CD8-positive, alpha-beta T cell (primary cell): ENCODE measurements at regions of chr10 and their contacts with region 1.

Region 1: DNA sequence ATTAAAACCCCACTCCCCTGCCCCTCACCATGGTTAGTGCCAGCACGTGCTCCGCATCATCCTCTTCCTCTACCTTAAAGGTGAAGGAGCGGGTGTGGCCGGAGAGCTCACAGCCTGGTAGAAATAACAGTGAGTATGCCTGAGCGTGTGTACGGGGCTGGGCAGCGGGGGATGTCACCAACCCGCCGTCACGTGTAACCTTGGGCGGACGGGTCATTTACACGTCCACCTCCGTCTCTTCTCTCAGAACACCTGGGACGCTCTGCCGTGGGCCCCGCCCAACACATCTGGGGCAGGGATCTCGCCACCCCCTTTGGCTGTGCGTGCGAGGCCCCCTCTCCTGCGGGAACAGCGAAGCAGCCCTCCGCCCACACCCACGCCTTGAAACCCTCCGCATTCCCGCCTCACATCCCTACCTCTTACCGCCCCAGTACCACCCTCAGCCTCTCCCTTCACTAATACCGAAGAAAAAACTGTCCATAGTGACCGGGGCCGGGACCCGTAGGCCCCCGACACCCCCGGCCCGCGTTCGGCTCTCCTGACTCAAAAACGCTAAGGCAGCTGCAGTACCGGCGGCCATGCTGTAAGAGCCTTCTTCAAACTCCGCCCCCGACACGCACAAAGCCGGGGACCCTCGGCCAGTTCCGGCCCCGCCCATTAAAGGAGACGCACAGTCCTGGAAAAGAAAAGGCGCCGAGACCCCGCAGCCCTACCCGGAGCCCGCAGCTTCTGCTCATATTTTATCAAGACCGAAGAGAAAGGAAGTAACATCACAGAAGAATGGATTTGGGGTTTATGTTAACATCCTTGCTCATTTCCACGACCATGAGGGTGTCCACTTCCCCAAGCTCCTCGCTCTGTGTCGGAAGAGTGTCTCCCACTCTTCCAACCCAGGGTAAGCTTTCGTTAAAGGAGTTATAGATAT is at the start of gene NPM3:
- DNase-seq: peak; percentile 54 to 88 (median 83)
- ATAC-seq: peak; percentile 80
- H3K4me3 ChIP-seq: peak within 1 kb of the TSS; percentile 81 to 87
- H3K4me3 Mint-ChIP-seq: peak within 1 kb of the TSS; percentile 100
- H3K27ac ChIP-seq: peak within 1 kb of the TSS; percentile 64 to 81
- H3K27ac Mint-ChIP-seq: peak within 1 kb of the TSS; percentile 97
- H3K4me1 ChIP-seq: peaks cover 53% of the 10 kb centered on the region
- H3K4me1 Mint-ChIP-seq: peaks cover 71% of the 10 kb centered on the region
- H3K27me3 ChIP-seq: peaks cover 13 to 20% of the 10 kb centered on the region in 2 experiments
- H3K27me3 Mint-ChIP-seq: peaks cover 6% of the 10 kb centered on the region
- CTCF ChIP-seq: no peak
- total RNA-seq, gene NPM3: 21.1 to 25.1 TPM

Region 2: DNA sequence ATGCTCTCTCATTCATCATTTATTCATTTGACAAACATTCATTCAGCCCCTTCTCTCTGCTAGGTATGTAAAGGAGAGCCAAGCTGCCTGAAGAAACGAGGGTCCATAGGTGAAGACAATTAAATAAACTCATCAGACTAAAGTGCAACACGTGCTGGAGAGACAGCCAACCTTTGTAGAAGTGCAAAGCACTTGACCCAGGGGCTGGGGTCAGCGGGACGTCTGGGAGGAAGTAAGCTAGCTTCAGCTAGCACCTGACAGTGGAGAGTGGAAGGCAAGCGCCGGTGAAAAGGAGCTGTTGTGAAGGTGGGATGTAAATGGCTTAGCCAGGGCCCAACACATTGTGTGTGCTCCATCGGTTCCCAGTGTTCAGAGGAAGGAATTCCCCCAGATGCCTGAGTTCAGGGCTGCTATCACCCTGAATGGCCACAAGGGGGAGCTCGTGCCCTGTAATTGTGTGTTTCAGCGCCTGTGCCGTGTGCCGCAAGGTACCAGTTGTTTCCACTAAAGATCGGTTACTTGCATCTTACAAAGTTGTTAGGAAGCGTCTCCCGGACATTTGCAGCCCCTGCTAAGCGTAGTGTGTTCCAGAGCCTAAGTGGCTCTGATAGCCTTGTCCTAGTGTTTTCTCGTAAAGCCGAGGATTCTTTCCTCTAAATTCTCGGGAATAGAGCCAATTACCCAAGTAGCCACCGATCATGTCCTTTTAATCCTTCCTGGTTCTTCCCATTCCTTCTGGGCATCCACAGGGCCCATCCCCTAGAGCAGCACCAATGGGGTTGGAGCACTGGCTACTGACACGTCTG is 621.4 kb before region 1 on chr10:
- CTCF ChIA-PET with region 1: no interaction called
- POLR2A ChIA-PET with region 1: no interaction called
- intact Hi-C with region 1: loop called in 1 of 2 experiments (anchors 5 kb)
- DNase-seq: peak; percentile 33 to 84 (median 70)
- ATAC-seq: peak; percentile 97
- H3K4me3 ChIP-seq: no peak overlapping the region
- H3K4me3 Mint-ChIP-seq: no peak overlapping the region
- H3K27ac ChIP-seq: no peak overlapping the region
- H3K27ac Mint-ChIP-seq: no peak overlapping the region
- H3K4me1 ChIP-seq: peaks cover 3% of the 10 kb centered on the region
- H3K4me1 Mint-ChIP-seq: peaks cover 5% of the 10 kb centered on the region
- H3K27me3 ChIP-seq: peaks cover 3 to 6% of the 10 kb centered on the region in 2 experiments
- H3K27me3 Mint-ChIP-seq: peaks cover 51% of the 10 kb centered on the region
- CTCF ChIP-seq: peak; percentile 90

Region 3: DNA sequence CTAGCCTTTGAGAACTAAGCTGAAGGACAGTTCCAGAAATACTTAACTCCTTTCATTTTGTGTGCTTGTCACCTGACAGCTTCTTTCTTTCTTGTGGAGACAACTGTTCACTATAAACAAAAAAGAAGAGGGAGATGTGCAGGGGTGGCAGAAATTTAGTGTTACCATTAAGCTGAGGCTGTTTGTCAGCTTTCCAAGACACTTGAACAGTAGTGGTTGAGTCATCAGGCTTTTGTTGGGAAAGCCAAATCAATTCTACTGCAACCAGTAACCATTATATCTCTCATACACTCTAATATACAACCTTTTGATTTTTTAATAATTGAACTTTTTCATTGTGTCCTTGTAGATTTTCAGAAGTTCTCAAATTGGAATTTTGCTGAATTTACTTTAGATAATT is 270.3 kb before region 1 on chr10:
- CTCF ChIA-PET with region 1: no interaction called
- POLR2A ChIA-PET with region 1: no interaction called
- intact Hi-C with region 1: no loop called
- DNase-seq: no peak
- ATAC-seq: no peak
- H3K4me3 ChIP-seq: no peak overlapping the region
- H3K4me3 Mint-ChIP-seq: no peak overlapping the region
- H3K27ac ChIP-seq: no peak overlapping the region
- H3K27ac Mint-ChIP-seq: no peak overlapping the region
- H3K4me1 ChIP-seq: no peaks in the 10 kb centered on the region
- H3K4me1 Mint-ChIP-seq: no peaks in the 10 kb centered on the region
- H3K27me3 ChIP-seq: no peaks in the 10 kb centered on the region
- H3K27me3 Mint-ChIP-seq: no peaks in the 10 kb centered on the region
- CTCF ChIP-seq: no peak

Region 4: DNA sequence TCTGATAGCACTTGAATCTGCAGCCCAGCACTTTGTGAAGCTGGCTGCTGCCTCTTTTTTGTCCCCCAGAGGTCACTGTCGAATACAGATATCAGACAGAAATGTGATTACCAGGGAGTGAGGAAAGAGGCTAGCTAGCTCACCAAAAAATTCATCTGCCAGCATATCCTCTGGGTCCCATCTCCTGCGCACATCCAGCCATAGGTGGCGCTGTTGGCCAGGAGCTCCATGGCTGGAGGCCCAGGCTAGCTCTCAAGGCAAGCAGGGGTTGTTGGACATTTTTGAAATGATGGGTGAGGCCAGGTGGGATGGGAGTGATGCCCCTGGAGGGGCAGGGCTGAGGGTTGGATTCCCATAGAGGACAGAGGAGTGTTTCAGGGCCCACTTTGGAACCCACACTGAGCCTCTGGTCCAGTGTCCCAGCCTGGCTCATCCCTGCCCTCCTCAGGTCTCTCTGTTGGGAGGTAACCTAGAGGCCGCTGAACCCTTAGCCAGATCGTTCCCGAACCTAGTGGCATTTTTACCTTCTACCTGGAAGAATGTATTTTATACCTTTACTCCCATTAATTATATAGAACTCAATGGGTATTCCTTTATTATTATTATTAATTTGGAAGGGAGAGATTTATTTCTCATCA is 180.2 kb before region 1 on chr10:
- CTCF ChIA-PET with region 1: interaction called, 13 read pairs
- POLR2A ChIA-PET with region 1: no interaction called
- intact Hi-C with region 1: loop called (anchors 1 kb)
- DNase-seq: peak in 8 of 9 experiments; percentile 26 to 68 (median 48)
- ATAC-seq: peak; percentile 81
- H3K4me3 ChIP-seq: no peak overlapping the region
- H3K4me3 Mint-ChIP-seq: no peak overlapping the region
- H3K27ac ChIP-seq: no peak overlapping the region
- H3K27ac Mint-ChIP-seq: no peak overlapping the region
- H3K4me1 ChIP-seq: no peaks in the 10 kb centered on the region
- H3K4me1 Mint-ChIP-seq: no peaks in the 10 kb centered on the region
- H3K27me3 ChIP-seq: no peaks in the 10 kb centered on the region
- H3K27me3 Mint-ChIP-seq: no peaks in the 10 kb centered on the region
- CTCF ChIP-seq: peak; percentile 75

Region 5: DNA sequence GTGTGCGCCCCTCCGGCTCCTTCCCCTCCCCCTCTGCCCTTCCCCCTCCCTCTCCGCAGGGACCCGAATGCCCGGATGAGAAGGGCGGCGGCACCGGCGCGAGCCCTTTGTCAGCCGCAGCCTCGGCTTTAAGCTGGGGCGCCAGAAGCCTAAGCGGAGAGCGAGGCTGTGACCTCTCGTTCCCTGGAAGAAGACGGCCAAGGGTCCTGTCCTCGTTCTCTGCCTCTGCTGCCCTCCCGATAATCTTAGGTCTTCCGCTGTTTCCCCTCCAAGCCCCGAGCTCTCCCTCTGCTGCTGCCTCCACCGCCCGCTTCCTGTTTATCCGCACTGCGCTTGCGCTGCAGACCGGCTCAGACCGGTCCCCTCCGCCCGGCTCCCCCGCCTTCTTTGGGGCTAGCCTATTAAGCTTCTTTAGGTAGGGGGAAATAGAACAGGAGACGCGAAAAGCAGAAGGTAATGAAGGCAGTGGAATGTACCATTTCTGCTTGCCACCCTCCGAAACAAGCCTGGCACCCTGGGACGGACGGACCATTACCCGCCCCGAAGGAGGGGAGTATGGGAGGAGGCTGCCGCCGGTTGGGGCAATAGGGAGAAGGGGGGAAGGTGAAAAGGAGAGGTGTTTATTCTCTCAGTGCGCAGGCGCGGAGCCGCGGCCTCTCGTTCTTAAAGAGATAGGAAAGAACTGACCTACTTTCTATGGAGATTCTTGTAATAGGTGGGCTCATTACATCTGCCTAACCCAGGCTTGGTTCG is 35.2 kb after region 1 on chr10 and contains the start of gene OGA:
- CTCF ChIA-PET with region 1: interaction called, 15 read pairs
- POLR2A ChIA-PET with region 1: interaction called, 38 read pairs
- intact Hi-C with region 1: loop called (anchors 1 kb)
- DNase-seq: peak; percentile 94 to 100 (median 98)
- ATAC-seq: peak; percentile 90
- H3K4me3 ChIP-seq: peak within 1 kb of the TSS; percentile 78 to 82
- H3K4me3 Mint-ChIP-seq: peak within 1 kb of the TSS; percentile 98
- H3K27ac ChIP-seq: peak within 1 kb of the TSS; percentile 81 to 90
- H3K27ac Mint-ChIP-seq: peak within 1 kb of the TSS; percentile 97
- H3K4me1 ChIP-seq: peaks cover 32% of the 10 kb centered on the region
- H3K4me1 Mint-ChIP-seq: peaks cover 51% of the 10 kb centered on the region
- H3K27me3 ChIP-seq: no peaks in the 10 kb centered on the region
- H3K27me3 Mint-ChIP-seq: no peaks in the 10 kb centered on the region
- CTCF ChIP-seq: no peak
- total RNA-seq, gene OGA: 356 to 394 TPM

Region 6: DNA sequence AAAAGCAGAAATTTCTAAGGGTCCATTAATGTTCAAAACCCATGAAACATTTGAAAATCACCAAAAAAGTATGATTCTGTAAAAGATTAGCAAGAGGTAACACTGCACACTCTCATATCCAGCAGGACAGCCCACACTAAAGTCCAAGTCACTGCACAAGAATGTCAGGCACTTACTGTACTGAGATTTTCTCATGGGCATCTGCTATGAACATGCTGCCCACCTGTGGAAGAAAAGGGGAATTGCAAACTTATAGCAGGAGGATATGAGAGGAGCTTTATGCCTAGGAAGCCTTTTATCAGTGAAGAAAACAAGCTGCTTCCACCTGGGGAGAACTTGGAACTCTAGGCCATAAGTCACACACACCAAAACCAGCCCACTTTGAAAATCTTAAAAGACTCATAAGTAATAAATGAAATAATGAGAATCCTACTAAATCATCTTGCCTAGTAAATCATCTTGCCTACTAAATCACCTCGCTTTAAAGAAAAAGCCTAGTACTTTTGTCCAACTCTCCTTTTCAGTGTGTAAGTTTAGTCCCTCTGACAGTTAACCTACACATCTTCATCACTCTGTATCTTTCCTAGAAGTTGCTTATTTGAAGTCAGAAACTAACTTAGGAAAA is 226.8 kb after region 1 on chr10:
- CTCF ChIA-PET with region 1: interaction called, 9 read pairs
- POLR2A ChIA-PET with region 1: interaction called, 4 read pairs
- intact Hi-C with region 1: loop called in 1 of 2 experiments (anchors 2 kb)
- DNase-seq: peak in 7 of 9 experiments; percentile 19 to 72 (median 35)
- ATAC-seq: peak; percentile 94
- H3K4me3 ChIP-seq: no peak overlapping the region
- H3K4me3 Mint-ChIP-seq: no peak overlapping the region
- H3K27ac ChIP-seq: no peak overlapping the region
- H3K27ac Mint-ChIP-seq: no peak overlapping the region
- H3K4me1 ChIP-seq: no peaks in the 10 kb centered on the region
- H3K4me1 Mint-ChIP-seq: peaks cover 2% of the 10 kb centered on the region
- H3K27me3 ChIP-seq: no peaks in the 10 kb centered on the region
- H3K27me3 Mint-ChIP-seq: no peaks in the 10 kb centered on the region
- CTCF ChIP-seq: peak; percentile 82

Region 7: DNA sequence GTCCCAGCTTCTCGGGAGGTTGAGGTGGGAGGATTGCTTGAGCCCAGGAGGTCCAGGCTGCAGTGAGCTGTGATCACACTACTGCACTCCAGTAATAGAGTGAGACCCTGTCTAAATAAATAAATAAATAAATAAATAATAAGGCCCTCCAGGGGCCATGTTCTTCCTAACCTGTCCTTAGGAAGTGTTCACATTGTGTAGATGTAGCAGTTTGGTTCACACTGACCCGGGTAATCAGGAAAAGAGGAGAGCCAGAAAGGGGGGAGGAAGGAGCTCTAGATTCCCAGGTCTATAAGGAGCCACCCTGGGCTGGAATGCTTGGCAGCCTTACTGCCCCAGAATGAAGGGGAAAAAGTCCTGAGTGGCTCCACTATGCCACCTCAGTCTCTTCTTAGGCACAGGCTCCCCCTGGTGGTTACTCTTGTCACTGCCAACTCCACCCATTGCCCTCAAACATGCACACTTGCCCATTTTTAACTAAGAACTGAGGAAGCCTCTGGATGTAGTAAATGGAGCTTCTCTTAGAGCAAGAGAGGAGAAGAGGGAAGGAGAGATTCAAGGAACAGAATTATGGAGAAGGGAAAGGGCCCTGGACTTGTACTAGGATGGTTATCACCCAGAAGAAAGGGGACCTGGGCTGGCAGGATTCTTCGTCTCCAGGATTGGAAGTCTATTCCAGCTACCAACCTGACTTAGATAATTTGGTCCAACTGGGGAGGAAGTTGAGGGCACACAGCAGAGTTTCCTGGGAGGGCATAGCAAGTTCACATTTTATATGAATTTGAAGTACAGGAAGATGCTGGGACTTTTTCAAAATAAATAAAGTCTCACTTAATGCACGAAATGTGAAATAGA is 289.8 kb after region 1 on chr10:
- CTCF ChIA-PET with region 1: interaction called, 3 read pairs
- POLR2A ChIA-PET with region 1: no interaction called
- intact Hi-C with region 1: loop called in 1 of 2 experiments (anchors 2 kb)
- DNase-seq: peak; percentile 63 to 86 (median 82)
- ATAC-seq: peak; percentile 97
- H3K4me3 ChIP-seq: no peak overlapping the region
- H3K4me3 Mint-ChIP-seq: no peak overlapping the region
- H3K27ac ChIP-seq: no peak overlapping the region
- H3K27ac Mint-ChIP-seq: no peak overlapping the region
- H3K4me1 ChIP-seq: no peaks in the 10 kb centered on the region
- H3K4me1 Mint-ChIP-seq: peaks cover 5% of the 10 kb centered on the region
- H3K27me3 ChIP-seq: no peaks in the 10 kb centered on the region
- H3K27me3 Mint-ChIP-seq: no peaks in the 10 kb centered on the region
- CTCF ChIP-seq: peak; percentile 82